T-cell (primary cell): ENCODE measurements at regions of chr22 and their contacts with region 1.

Region 1: DNA sequence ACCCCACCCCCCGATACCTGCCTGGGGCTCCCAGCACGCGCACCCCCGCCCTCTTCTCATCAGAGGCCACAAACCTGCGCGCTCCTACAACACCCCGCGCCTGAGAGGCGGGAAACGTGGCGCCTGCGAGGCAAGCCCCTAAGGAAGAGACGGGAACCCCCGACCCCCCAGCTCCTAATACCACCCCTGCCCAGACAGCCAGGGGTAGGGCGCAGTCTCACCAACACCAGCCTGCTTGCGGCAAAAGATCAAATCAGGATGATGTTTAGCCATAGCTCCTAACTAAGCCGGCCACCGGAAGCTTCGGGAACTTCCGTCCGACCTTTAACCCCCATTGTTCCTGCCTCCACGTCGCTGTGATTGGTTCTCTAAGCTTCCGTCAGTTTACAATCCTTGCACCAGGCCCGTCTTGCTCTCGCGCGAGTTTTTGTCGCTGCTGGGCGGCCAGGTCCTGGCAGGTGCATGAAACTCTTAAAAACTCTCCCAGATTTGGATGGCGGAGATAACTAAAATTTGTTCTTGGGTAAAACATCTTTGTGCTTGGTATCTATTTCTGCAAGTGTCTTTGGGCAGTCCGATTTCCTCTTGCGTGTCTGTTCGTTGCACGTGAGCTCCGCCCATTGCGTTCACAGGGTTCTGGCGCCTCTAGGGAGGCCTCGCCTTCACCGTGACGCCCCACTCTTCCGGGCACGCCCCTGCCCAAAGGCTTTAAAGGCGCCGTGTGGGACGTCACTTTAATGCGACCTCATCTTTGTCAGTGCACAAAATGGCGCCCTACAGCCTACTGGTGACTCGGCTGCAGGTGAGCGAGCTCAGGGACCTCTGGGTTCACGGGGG is at the starts of genes ACO2 and PHF5A:
- DNase-seq: peak; percentile 94 to 99 (median 97)
- ATAC-seq: peak; percentile 90 to 94 (median 92)
- H3K4me3 ChIP-seq: peak within 1 kb of the TSS; percentile 92 to 96
- H3K4me3 Mint-ChIP-seq: peak within 1 kb of the TSS; percentile 87 to 93 (median 87)
- H3K27ac ChIP-seq: peak within 1 kb of the TSS; percentile 92
- H3K27ac Mint-ChIP-seq: peak within 1 kb of the TSS; percentile 99 to 100
- H3K4me1 ChIP-seq: peaks cover 15 to 30% of the 10 kb centered on the region in 2 experiments
- H3K4me1 Mint-ChIP-seq: peaks cover 48 to 63% (median 62%) of the 10 kb centered on the region in 3 donors
- H3K27me3 ChIP-seq: no peaks in the 10 kb centered on the region
- H3K27me3 Mint-ChIP-seq: no peaks in the 10 kb centered on the region
- total RNA-seq, gene ACO2: 72.0 to 82.2 (median 77.0) TPM
- total RNA-seq, gene PHF5A: 29.0 to 45.9 (median 38.0) TPM

Region 2: GRCh38 chr22:41448189-41448808 is 20.3 kb before region 1 on chr22:
- CTCF ChIA-PET with region 1: interaction called in 1 of 2 experiments, 8 read pairs
- POLR2A ChIA-PET with region 1: interaction called, 5 to 25 read pairs
- DNase-seq: peak; percentile 76 to 95 (median 87)
- ATAC-seq: peak; percentile 69 to 74 (median 70)
- H3K4me3 ChIP-seq: peak overlapping the region; percentile 70 to 86
- H3K4me3 Mint-ChIP-seq: peak overlapping the region; percentile 89 to 99 (median 89)
- H3K27ac ChIP-seq: peak overlapping the region; percentile 96
- H3K27ac Mint-ChIP-seq: peak overlapping the region; percentile 88 to 93
- H3K4me1 ChIP-seq: peaks cover 8 to 33% of the 10 kb centered on the region in 2 experiments
- H3K4me1 Mint-ChIP-seq: peaks cover 16 to 28% (median 17%) of the 10 kb centered on the region in 3 donors
- H3K27me3 ChIP-seq: no peaks in the 10 kb centered on the region
- H3K27me3 Mint-ChIP-seq: no peaks in the 10 kb centered on the region

Region 3: GRCh38 chr22:41458161-41458728 is 10.4 kb before region 1 on chr22:
- CTCF ChIA-PET with region 1: interaction called, 6 to 15 read pairs
- POLR2A ChIA-PET with region 1: interaction called, 6 read pairs
- DNase-seq: no peak
- ATAC-seq: no peak
- H3K4me3 ChIP-seq: no peak overlapping the region
- H3K4me3 Mint-ChIP-seq: no peak overlapping the region
- H3K27ac ChIP-seq: no peak overlapping the region
- H3K27ac Mint-ChIP-seq: no peak overlapping the region
- H3K4me1 ChIP-seq: no peaks in the 10 kb centered on the region
- H3K4me1 Mint-ChIP-seq: peaks cover 0 to 6% (median 2%) of the 10 kb centered on the region in 3 donors
- H3K27me3 ChIP-seq: no peaks in the 10 kb centered on the region
- H3K27me3 Mint-ChIP-seq: no peaks in the 10 kb centered on the region

Region 4: GRCh38 chr22:41713004-41713403 is 244.4 kb after region 1 on chr22:
- CTCF ChIA-PET with region 1: no interaction called
- POLR2A ChIA-PET with region 1: no interaction called
- DNase-seq: no peak
- ATAC-seq: no peak
- H3K4me3 ChIP-seq: no peak overlapping the region
- H3K4me3 Mint-ChIP-seq: no peak overlapping the region
- H3K27ac ChIP-seq: no peak overlapping the region
- H3K27ac Mint-ChIP-seq: no peak overlapping the region
- H3K4me1 ChIP-seq: no peaks in the 10 kb centered on the region
- H3K4me1 Mint-ChIP-seq: no peaks in the 10 kb centered on the region
- H3K27me3 ChIP-seq: no peaks in the 10 kb centered on the region
- H3K27me3 Mint-ChIP-seq: no peaks in the 10 kb centered on the region